PC-9 (cell line): ENCODE measurements at regions of chr14 and their contacts with region 1.

Region 1: GRCh38 chr14:50677527-50678063 is 9.5 kb upstream of the SAV1 start:
- DNase-seq: peak; percentile 35 to 92
- H3K4me3 ChIP-seq: peak overlapping the region; percentile 43
- H3K27ac ChIP-seq: peak overlapping the region; percentile 85
- H3K4me1 ChIP-seq: peaks cover 43% of the 10 kb centered on the region
- H3K27me3 ChIP-seq: no peaks in the 10 kb centered on the region
- CTCF ChIP-seq: no peak

Region 2: DNA sequence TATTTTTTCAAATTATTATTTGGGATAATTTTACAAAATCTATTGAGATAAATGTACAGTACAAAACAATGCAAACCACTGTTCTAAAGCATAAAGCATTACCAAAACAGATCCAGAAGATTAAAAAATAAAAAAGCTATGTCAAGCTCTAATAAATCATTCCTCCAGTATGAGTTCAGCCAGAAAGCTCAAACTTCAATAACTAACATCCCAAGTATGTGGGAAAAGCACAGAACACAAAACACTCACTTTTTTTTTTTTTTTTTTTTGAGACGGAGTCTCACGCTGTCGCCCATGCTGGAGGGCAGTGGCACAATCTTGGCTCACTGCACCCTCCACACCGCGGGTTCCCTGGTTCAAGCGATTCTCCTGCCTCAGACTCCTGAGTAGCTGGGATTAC is 20.8 kb before region 1 on chr14:
- CTCF ChIA-PET with region 1: no interaction called
- POLR2A ChIA-PET with region 1: interaction called, 15 read pairs
- intact Hi-C with region 1: no loop called
- DNase-seq: no peak
- H3K4me3 ChIP-seq: no peak overlapping the region
- H3K27ac ChIP-seq: no peak overlapping the region
- H3K4me1 ChIP-seq: peaks cover 9% of the 10 kb centered on the region
- H3K27me3 ChIP-seq: no peaks in the 10 kb centered on the region
- CTCF ChIP-seq: no peak

Region 3: DNA sequence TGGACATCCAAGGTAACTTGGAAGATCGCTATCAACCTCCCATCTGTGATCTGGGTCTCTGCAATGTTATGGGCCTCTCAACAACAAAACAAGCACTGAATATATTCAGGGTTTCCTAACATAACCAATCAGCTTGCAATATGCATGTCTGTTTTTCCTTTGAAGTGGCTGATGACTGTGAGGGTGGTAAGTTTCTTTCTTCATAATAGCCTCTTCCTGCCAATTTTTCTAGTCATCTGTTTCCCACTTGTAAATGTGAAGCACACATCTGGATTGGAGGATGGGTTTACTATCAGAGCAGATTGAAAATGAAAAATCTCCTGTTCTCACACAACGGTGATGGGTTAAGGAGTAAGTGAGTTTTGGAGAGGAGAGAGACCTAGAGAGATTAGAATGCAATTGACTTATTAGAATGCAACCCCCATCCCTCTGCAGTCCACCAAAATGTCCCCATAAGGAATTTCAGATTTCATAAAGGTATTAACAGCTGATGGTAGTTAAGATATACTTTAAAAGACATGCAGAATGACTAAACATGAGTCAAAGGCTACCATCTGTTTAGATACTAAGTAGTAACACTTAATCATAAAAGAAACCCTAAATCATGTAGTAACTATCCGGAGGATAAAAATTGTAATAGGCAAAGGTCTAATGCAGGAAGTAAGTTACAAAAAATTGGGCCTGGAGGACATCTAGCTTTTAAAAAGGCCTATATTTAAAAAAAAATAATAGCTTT is 48.9 kb after region 1 on chr14:
- CTCF ChIA-PET with region 1: no interaction called
- POLR2A ChIA-PET with region 1: interaction called, 10 read pairs
- intact Hi-C with region 1: no loop called
- DNase-seq: no peak
- H3K4me3 ChIP-seq: no peak overlapping the region
- H3K27ac ChIP-seq: no peak overlapping the region
- H3K4me1 ChIP-seq: no peaks in the 10 kb centered on the region
- H3K27me3 ChIP-seq: no peaks in the 10 kb centered on the region
- CTCF ChIP-seq: no peak

Region 4: DNA sequence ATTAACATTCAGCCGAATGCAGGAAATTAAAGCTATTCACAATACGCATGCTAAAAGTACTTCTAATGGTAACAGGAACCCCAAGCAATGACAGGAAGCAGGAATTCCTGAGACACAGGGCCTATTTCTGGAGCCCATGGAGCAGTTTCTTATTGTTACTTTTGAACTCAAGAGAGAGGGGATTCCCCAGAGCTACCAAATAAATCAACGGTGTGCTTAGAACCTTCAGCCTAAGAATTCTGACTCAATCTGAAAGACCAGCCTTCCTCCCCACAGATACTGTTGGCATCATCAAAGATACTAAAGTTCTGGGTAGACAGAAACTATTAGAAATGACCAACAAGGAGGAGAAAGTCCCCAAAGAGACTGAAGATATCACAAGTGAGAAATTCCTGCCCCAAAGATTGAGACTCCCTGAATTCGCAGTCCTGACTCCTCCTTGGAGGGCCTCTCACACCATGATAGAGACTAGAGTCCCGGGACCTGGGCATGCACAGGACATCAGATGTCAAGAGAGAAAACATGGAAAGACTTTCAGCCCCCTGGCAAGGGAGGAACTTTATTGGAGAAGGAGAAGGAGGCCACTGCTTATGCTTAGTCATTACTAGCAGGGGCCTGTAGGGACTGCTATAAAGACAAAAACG is 1344.5 kb after region 1 on chr14:
- CTCF ChIA-PET with region 1: no interaction called
- POLR2A ChIA-PET with region 1: no interaction called
- intact Hi-C with region 1: no loop called
- DNase-seq: no peak
- H3K4me3 ChIP-seq: no peak overlapping the region
- H3K27ac ChIP-seq: no peak overlapping the region
- H3K4me1 ChIP-seq: no peaks in the 10 kb centered on the region
- H3K27me3 ChIP-seq: no peaks in the 10 kb centered on the region
- CTCF ChIP-seq: no peak